MCF 10A (cell line): ENCODE measurements at regions of chr14 and their contacts with region 1.

Region 1: DNA sequence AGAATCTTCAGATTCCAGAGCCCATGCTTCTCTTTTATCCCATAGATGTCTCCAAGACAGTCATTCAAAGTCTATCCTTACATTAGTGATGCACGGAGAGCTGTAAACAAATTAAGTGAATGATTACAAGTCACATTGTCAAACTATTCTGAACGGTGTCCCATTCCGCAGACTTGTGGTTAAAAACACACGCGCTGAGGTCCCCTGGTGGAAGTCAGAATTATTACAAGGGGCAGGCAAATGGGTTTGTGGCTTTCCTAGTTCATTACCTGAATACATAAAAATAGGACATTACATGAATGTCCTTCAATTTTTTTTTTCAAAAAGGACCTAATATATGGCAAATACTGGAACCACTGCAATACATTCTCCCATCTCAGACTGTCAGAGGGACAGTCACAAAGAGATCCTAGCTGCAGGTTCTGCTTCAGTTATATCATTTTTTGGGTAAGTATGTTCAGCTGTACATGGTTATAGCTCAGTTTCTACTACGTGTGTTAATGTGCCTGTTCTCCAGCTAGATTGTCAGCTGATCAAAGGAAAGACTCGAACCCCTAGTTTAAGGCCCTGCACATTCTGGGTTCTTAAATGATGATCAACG is 53.1 kb upstream of the STON2 start:
- DNase-seq: peak; percentile 68
- H3K4me3 Mint-ChIP-seq: no peak overlapping the region
- H3K27ac Mint-ChIP-seq: no peak overlapping the region
- H3K4me1 Mint-ChIP-seq: peaks cover 8% of the 10 kb centered on the region
- H3K27me3 Mint-ChIP-seq: no peaks in the 10 kb centered on the region
- CTCF ChIP-seq: peak; percentile 86

Region 2: DNA sequence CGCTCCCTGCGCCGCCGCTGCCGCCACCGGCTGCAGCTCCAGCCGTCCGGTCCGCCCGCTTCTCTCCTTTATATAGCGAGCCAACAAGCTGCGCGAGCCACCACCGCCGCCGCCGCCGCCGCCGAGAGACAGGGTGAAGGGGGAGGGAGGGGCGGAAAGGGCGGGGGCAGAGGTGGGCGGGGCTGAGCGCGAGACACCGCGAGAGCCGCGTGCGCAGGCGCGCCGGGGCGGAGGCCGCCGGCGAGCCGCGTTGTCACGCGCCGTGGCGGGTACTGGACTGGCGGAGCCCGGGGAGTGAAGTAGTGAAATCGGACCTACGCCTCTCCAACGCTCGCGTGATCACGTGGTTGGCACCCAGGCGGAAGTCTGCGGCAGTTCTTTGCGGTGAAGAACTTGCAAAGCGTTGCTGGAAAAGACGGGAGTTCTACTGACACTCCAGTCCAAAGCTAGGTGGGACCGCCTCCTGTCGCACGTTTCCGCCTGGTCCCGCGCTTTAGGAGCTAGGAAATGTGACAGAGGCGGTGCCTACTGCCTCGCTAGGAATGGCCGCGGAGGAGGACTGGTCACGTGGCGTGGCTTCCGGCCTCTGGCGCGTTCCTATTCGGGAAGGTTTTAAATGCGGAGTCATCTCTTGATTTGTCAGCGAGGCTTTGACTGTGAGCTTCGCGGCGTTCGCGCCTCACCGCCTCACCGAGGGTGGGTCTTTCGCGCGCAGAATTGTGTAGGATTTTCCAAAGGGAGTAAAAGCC is 232.3 kb before region 1 on chr14 and contains the start of gene GTF2A1:
- CTCF ChIA-PET with region 1: interaction called, 4 read pairs
- POLR2A ChIA-PET with region 1: interaction called, 5 read pairs
- intact Hi-C with region 1: loop called (anchors 5 kb)
- DNase-seq: peak; percentile 94
- H3K4me3 Mint-ChIP-seq: peak within 1 kb of the TSS; percentile 93
- H3K27ac Mint-ChIP-seq: peak within 1 kb of the TSS; percentile 99
- H3K4me1 Mint-ChIP-seq: peaks cover 6% of the 10 kb centered on the region
- H3K27me3 Mint-ChIP-seq: no peaks in the 10 kb centered on the region
- CTCF ChIP-seq: no peak
- total RNA-seq, gene GTF2A1: 35.0 and 49.4 TPM in 2 replicates

Region 3: DNA sequence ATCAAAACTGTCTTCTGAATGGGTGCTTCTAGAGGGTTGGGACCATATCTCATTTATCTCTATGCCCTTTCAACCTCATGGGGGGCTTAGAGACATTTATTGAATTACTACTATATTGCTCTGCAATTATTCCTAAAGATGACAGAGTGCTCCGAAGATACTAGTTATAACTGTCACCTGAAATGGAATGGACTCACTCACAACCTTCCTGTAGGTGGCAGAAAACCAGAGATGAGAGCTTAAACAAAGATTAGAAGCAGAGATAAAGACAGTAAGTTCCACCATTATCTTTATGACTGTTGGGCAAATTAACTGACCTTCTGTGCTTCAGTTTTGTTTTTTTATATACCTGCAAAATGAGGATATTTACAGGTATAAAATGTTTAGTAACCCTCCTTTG is 201.0 kb before region 1 on chr14:
- CTCF ChIA-PET with region 1: interaction called, 26 read pairs
- POLR2A ChIA-PET with region 1: no interaction called
- intact Hi-C with region 1: no loop called
- DNase-seq: no peak
- H3K4me3 Mint-ChIP-seq: no peak overlapping the region
- H3K27ac Mint-ChIP-seq: no peak overlapping the region
- H3K4me1 Mint-ChIP-seq: no peaks in the 10 kb centered on the region
- H3K27me3 Mint-ChIP-seq: no peaks in the 10 kb centered on the region
- CTCF ChIP-seq: no peak

Region 4: DNA sequence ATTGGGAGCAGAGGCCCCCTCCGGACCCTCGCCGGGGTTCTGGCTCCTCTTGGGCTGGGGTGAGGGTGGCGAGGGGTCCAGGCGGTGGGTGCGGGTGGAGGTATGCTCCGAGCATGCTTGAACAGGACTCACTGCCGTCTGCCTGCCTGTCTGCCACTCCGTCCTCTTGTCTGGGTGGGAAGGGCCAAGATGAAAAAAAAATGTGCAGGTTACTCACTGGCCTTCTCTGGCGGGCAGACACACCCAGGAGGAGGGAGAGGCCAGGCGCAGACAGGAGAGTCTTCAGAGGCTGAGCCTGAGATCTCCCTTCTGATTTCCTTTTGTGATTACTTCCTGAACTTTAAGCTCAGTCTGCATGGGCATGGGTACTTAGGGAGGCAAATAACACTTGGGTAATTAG is 129.2 kb before region 1 on chr14:
- CTCF ChIA-PET with region 1: interaction called, 7 read pairs
- POLR2A ChIA-PET with region 1: interaction called, 5 read pairs
- intact Hi-C with region 1: loop called (anchors 2 kb)
- DNase-seq: peak; percentile 89
- H3K4me3 Mint-ChIP-seq: peak overlapping the region; percentile 70
- H3K27ac Mint-ChIP-seq: peak overlapping the region; percentile 14
- H3K4me1 Mint-ChIP-seq: peaks cover 28% of the 10 kb centered on the region
- H3K27me3 Mint-ChIP-seq: no peaks in the 10 kb centered on the region
- CTCF ChIP-seq: no peak

Region 5: GRCh38 chr14:81436296-81437138 is 16.7 kb before region 1 on chr14:
- CTCF ChIA-PET with region 1: interaction called, 36 read pairs
- POLR2A ChIA-PET with region 1: interaction called, 5 read pairs
- intact Hi-C with region 1: no loop called
- DNase-seq: peak; percentile 81
- H3K4me3 Mint-ChIP-seq: peak overlapping the region; percentile 70
- H3K27ac Mint-ChIP-seq: no peak overlapping the region
- H3K4me1 Mint-ChIP-seq: peaks cover 10% of the 10 kb centered on the region
- H3K27me3 Mint-ChIP-seq: no peaks in the 10 kb centered on the region
- CTCF ChIP-seq: no peak

Region 6: GRCh38 chr14:81464247-81465002 is 11.2 kb after region 1 on chr14:
- CTCF ChIA-PET with region 1: interaction called, 67 read pairs
- POLR2A ChIA-PET with region 1: interaction called, 4 read pairs
- intact Hi-C with region 1: no loop called
- DNase-seq: peak; percentile 75
- H3K4me3 Mint-ChIP-seq: peak overlapping the region; percentile 40
- H3K27ac Mint-ChIP-seq: no peak overlapping the region
- H3K4me1 Mint-ChIP-seq: no peaks in the 10 kb centered on the region
- H3K27me3 Mint-ChIP-seq: no peaks in the 10 kb centered on the region
- CTCF ChIP-seq: peak; percentile 67

Region 7: DNA sequence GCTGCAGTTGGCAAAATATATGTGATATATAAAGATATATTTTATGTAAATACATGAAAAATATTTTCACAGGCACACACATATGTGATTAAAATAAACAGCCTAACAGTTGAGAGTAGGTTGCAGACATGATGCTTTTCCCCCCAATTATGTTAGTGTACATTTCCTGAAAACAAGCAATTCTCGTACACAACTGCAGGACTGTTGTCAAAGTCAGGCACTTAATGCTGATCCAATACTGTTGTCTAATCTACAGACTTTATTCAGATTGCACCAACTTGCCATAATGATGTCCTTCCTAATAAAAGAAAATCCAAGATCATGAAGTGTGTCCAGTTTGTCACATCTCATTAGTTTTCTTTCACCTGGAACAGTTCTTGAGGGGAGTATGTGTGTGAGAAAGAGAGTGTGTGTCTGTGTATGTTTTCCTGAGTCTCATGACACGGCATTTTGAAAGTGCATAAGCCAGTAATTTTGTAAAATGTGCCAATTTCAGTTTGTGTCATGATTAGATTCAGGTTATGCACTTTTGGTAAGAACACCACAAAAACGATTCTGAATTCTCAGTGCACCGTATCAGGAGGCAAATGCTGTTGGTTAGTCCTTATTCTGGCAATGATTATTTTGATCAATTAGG is 96.9 kb after region 1 on chr14:
- CTCF ChIA-PET with region 1: no interaction called
- POLR2A ChIA-PET with region 1: no interaction called
- intact Hi-C with region 1: no loop called
- DNase-seq: no peak
- H3K4me3 Mint-ChIP-seq: no peak overlapping the region
- H3K27ac Mint-ChIP-seq: no peak overlapping the region
- H3K4me1 Mint-ChIP-seq: no peaks in the 10 kb centered on the region
- H3K27me3 Mint-ChIP-seq: no peaks in the 10 kb centered on the region
- CTCF ChIP-seq: no peak